Heart left ventricle (tissue), 16 donors: ENCODE measurements at regions of chr1 and their contacts with region 1.

Region 1: DNA sequence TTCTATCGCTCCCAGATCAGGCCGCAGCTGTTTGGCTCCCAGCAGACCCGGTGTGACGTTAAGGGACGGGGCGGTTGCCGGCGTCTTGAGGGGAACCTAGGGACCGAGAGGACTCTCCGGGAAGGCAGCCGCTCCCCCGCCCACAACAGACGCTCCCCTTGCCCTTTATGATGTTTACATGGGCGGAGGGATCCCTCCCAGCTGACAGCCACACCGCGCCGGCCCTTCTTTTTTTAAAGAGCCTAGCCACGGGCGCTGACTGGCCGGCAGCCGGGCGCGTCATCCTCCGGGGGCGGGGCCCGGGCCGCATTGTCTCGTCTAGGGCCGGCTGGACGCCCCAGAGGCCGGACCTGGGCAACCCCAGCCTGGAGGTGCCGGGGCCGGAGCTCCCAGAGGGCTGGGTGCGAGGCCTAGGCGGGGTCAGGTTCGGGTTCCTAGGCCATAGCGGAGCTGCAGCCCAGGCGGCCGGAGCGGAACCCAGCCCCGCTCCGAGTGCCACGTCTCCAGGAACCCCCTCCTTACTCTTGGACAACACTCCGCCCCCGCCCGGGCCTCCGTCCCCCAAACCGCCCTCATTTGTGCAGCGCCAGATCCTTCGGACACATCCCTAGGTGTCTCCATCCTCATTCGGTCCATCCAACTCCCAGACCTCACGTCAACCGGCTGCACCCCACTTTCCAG is at the start of gene PCAT6:
- DNase-seq: peak; percentile 95 to 97 (median 96)
- ATAC-seq: peak; percentile 91 to 96 (median 94)
- H3K4me3 ChIP-seq: peak within 1 kb of the TSS; percentile 51 to 89 (median 75)
- H3K27ac ChIP-seq: peak within 1 kb of the TSS; percentile 43 to 91 (median 82)
- H3K4me1 ChIP-seq: peaks cover 0 to 39% (median 18%) of the 10 kb centered on the region in 12 donors
- H3K27me3 ChIP-seq: no peaks in the 10 kb centered on the region
- CTCF ChIP-seq: no peak
- POLR2A ChIP-seq: peak in 1 of 2 donors; percentile 88
- total RNA-seq, gene PCAT6: 0.39 to 2.5 (median 1.0) TPM in 8 of 9 donors, not detected in the other

Region 2: GRCh38 chr1:202957733-202958543 is 147.2 kb after region 1 on chr1 and contains the start of gene ADIPOR1:
- intact Hi-C with region 1: loop called in 1 of 10 experiments (anchors 5 kb)
- DNase-seq: peak; percentile 92 to 96 (median 94)
- ATAC-seq: peak; percentile 97 to 99 (median 98)
- H3K4me3 ChIP-seq: peak within 1 kb of the TSS; percentile 92 to 100 (median 98)
- H3K27ac ChIP-seq: peak within 1 kb of the TSS; percentile 65 to 99 (median 96)
- H3K4me1 ChIP-seq: peaks cover 2 to 64% (median 45%) of the 10 kb centered on the region in 12 donors
- H3K27me3 ChIP-seq: no peaks in the 10 kb centered on the region
- CTCF ChIP-seq: peak in 6 of 12 donors; percentile 10 to 44 (median 35)
- POLR2A ChIP-seq: peak; percentile 92 to 95
- total RNA-seq, gene ADIPOR1: 91.4 to 155 (median 102) TPM